IMR-90 (cell line): ENCODE measurements at regions of chr4 and their contacts with region 1.

Region 1: DNA sequence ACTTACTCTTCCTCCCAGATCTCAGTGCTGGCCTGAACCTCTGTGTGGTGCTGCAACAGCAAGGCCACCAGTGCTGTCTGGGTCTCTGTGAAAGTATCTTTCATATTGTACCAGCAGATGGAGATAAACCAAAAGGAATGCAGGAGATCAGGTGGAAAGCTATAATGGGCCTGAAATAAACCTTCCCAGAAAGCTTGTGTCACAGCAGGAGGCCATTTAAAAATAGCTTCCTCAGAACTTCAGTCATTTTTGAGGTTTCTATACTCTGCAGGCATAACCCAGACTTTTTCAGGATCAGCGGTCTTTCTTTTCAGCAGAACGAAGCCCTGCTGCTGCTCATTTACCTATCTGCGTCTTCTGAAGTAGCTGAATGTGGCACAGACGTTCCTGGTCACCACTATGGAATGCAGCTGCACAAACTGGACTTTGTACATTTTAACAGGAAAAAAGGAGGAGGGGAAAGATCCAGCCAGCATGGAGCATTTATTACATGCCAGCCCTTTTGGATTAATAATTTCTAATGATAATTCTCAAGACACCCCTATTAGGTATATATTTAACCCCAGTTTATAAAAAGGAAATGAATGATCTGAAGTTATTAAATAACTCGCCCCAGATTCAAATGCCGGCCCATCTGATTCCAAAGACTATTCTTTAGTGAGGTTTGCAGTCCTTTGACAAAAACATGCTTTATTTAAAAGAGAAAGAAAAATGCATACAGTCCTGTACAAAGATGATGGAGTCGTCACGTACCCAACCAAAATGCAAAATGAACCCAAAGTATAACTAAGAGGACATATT is 119.7 kb downstream of the NFKB1 start:
- DNase-seq: peak; percentile 82
- ATAC-seq: peak; percentile 89
- H3K4me3 ChIP-seq: peak overlapping the region; percentile 2; the same call in 1 of the 2 replicates
- H3K27ac ChIP-seq: no peak overlapping the region
- H3K4me1 ChIP-seq: peaks cover 7% of the 10 kb centered on the region
- H3K27me3 ChIP-seq: no peaks in the 10 kb centered on the region
- CTCF ChIP-seq: peak; percentile 72
- POLR2A ChIP-seq: no peak
- RAD21 ChIP-seq: peak; percentile 84

Region 2: DNA sequence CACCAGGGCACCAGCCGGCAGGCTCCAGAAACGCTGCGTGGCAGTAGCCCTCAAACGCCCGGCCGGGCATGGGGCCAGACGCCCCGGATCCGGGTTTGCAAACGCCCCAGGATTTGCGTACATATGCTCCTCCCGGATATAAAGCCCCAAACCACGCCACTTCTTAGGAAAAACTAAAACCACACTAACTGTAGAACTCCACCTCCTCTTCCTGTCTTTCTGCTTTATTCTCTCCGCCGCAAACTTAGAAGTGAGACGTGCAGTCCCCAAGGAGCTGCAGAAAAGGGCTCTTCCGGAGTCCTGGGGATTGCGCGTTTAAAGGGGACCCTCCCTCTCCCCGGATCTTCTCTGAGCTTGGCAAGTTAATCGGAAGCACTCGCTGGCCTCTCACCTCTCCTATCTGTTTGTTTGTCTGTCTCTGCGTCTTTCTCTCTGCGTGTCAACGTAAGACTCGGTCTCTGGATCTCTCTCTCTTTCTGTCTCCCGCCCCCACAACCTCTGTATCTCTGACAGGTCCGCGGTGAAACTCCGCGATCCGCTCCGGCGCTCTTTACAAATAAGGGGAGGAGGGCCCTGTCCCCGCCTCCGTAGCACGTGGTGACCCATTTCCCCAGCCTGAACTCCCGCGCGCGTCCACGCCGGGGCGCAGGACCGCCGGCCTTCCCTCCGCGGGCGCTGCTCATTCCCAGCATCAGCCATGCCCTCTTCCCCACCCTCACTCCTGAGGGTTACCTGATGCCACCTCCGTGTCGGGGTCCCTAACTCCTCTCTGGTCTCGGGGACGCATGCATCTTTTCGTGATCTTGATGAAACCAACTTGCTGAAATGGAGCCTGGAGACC is 275.7 kb before region 1 on chr4 and contains the start of gene SLC39A8:
- CTCF ChIA-PET with region 1: no interaction called
- POLR2A ChIA-PET with region 1: no interaction called
- dilution Hi-C with region 1: no loop called
- in situ Hi-C with region 1: no loop called
- intact Hi-C with region 1: loop called (anchors 10 kb)
- DNase-seq: peak; percentile 44
- ATAC-seq: peak; percentile 90
- H3K4me3 ChIP-seq: peak within 1 kb of the TSS; percentile 52
- H3K27ac ChIP-seq: no peak within 1 kb of the TSS
- H3K4me1 ChIP-seq: no peaks in the 10 kb centered on the region
- H3K27me3 ChIP-seq: peaks cover 23% of the 10 kb centered on the region
- CTCF ChIP-seq: peak; percentile 59
- POLR2A ChIP-seq: no peak
- RAD21 ChIP-seq: peak; percentile 48
- total RNA-seq, gene SLC39A8: 0.18 and 0.28 TPM in 2 replicates

Region 3: GRCh38 chr4:102493794-102494193 is 127.1 kb before region 1 on chr4:
- CTCF ChIA-PET with region 1: no interaction called
- POLR2A ChIA-PET with region 1: no interaction called
- dilution Hi-C with region 1: no loop called
- in situ Hi-C with region 1: no loop called
- intact Hi-C with region 1: no loop called
- DNase-seq: no peak
- ATAC-seq: no peak
- H3K4me3 ChIP-seq: no peak overlapping the region
- H3K27ac ChIP-seq: no peak overlapping the region
- H3K4me1 ChIP-seq: no peaks in the 10 kb centered on the region
- H3K27me3 ChIP-seq: no peaks in the 10 kb centered on the region
- CTCF ChIP-seq: no peak
- POLR2A ChIP-seq: no peak
- RAD21 ChIP-seq: no peak

Region 4: DNA sequence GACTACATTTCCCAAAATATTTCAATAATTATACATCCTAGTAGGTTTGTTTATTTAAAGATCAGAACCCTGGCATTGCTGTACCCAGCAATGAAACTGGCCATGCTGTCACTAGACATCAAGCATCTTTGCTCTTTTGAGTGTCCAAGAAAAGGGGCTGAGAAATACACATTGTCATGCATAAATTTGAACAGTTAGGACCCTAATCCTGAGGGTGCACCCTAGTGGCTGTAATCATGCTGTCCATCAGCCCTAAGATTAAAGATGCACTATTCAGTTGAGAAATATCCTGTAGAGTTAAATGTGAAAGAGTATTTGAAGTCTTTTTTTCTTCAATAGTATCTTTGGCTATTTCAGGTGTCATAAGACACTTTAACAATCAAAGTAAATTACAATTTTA is 10.9 kb before region 1 on chr4:
- CTCF ChIA-PET with region 1: interaction called, 19 read pairs
- POLR2A ChIA-PET with region 1: no interaction called
- dilution Hi-C with region 1: no loop called
- in situ Hi-C with region 1: no loop called
- intact Hi-C with region 1: no loop called
- DNase-seq: peak; percentile 12
- ATAC-seq: peak; percentile 40; the same call in 1 of the 2 replicates
- H3K4me3 ChIP-seq: no peak overlapping the region
- H3K27ac ChIP-seq: no peak overlapping the region
- H3K4me1 ChIP-seq: no peaks in the 10 kb centered on the region; the same call in 1 of the 2 replicates
- H3K27me3 ChIP-seq: no peaks in the 10 kb centered on the region
- CTCF ChIP-seq: peak; percentile 41
- POLR2A ChIP-seq: no peak
- RAD21 ChIP-seq: peak; percentile 26; the same call in 1 of the 2 replicates

Region 5: DNA sequence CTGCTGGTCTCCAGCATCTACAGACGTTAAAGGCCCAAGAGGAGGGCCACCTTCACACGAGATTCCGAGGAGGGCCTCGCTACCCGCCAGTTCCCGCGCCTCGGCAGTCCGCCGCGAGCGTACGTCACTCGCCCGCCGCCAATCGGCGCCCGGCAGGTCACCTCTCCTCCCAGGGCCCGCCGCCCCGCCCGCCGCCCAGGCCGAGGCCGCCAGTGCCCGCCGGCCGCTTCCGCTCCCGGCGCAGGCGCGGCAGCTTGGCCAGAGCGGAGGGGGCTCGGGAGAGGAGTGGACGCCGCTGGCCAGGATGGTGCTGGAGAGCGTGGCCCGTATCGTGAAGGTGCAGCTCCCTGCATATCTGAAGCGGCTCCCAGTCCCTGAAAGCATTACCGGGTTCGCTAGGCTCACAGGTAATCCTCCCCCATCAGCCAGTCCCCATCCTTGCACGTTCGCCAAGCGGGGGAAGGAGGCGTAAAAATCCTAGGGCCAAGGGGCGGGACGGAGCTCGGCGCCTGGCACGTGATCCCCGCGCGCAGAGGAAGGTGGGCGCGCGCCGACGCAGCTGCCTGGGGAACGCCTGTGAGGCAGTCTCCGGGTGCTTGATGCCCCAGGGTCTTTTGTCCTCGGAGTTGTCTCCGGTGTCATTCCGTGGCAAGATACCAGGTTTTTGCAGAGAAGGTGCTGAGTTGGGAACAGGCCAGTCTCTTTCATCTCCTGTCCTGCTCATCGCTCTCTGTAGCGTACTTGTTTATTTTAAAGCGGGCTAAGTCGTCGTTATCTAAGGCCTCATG is 248.1 kb after region 1 on chr4 and contains the start of gene CISD2:
- CTCF ChIA-PET with region 1: no interaction called
- POLR2A ChIA-PET with region 1: no interaction called
- dilution Hi-C with region 1: no loop called
- in situ Hi-C with region 1: no loop called
- intact Hi-C with region 1: loop called (anchors 5 kb)
- DNase-seq: peak; percentile 85
- ATAC-seq: peak; percentile 98
- H3K4me3 ChIP-seq: peak within 1 kb of the TSS; percentile 81
- H3K27ac ChIP-seq: peak within 1 kb of the TSS; percentile 96
- H3K4me1 ChIP-seq: no peaks in the 10 kb centered on the region
- H3K27me3 ChIP-seq: no peaks in the 10 kb centered on the region
- CTCF ChIP-seq: no peak
- POLR2A ChIP-seq: peak; percentile 83
- RAD21 ChIP-seq: no peak
- total RNA-seq, gene CISD2: 7.0 and 21.1 TPM in 2 replicates

Region 6: DNA sequence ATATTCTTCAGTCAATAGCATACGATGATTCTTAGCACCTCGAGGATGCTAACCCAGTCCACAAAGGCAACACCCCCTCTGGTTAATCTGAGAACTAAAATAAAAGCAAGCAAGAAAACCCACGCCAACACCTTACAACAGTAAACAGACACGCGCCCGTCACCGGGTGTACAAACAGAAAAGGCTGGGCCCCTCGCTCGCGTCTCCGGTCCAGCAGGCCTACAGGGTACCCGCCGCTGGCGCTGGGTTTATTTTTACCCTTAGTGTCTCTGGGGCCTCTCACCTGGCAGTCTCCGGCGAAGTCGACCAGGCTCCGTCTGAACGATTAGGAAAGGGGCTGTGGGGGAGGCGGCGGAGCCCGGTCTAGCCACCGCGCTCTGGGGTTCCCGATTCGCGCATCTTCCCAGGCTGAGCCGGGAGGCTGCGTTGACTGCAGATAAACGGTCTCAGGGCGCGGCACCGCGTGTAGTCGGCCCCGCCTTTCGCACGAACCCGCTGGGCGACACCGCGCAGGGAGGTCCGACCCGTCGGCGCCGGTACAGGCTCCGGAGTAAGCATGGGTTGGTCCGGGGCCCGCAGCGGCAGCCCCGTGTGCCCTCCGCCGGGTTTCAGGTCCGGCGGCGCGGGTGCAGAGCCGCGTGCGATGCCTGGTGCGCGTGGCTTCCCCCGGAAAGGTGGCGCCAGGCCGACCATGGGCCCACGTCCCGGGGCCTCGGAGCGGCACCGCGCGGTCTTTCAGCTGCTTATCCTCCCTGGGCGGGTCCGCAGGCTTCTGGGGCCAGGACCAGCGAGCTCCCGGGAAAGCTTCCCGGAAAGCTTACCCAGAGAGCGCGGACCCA is 455.2 kb after region 1 on chr4:
- CTCF ChIA-PET with region 1: no interaction called
- POLR2A ChIA-PET with region 1: no interaction called
- dilution Hi-C with region 1: no loop called
- in situ Hi-C with region 1: no loop called
- intact Hi-C with region 1: loop called (anchors 5 kb)
- DNase-seq: peak; percentile 56
- ATAC-seq: peak; percentile 80
- H3K4me3 ChIP-seq: peak overlapping the region; percentile 76
- H3K27ac ChIP-seq: peak overlapping the region; percentile 71
- H3K4me1 ChIP-seq: peaks cover 2% of the 10 kb centered on the region; the same call in 1 of the 2 replicates
- H3K27me3 ChIP-seq: no peaks in the 10 kb centered on the region
- CTCF ChIP-seq: no peak
- POLR2A ChIP-seq: no peak; the same call in 1 of the 2 replicates
- RAD21 ChIP-seq: no peak

Region 7: GRCh38 chr4:103934178-103934789 is 1313.4 kb after region 1 on chr4:
- CTCF ChIA-PET with region 1: no interaction called
- POLR2A ChIA-PET with region 1: no interaction called
- dilution Hi-C with region 1: no loop called
- in situ Hi-C with region 1: no loop called
- intact Hi-C with region 1: loop called (anchors 5 kb)
- DNase-seq: peak; percentile 28
- ATAC-seq: no peak; the same call in 1 of the 2 replicates
- H3K4me3 ChIP-seq: no peak overlapping the region
- H3K27ac ChIP-seq: no peak overlapping the region
- H3K4me1 ChIP-seq: no peaks in the 10 kb centered on the region
- H3K27me3 ChIP-seq: no peaks in the 10 kb centered on the region
- CTCF ChIP-seq: peak; percentile 58
- POLR2A ChIP-seq: no peak
- RAD21 ChIP-seq: peak; percentile 37